ENCODE measurements at regions of chr22 and their contacts with region 1.

Region 1: GRCh38 chr22:45645526-45646414 is 25.9 kb upstream of the ATXN10 start:
- DNase-seq: peak in 9 of 10 donors; percentile 42 to 85 (median 62)
- H3K4me3 ChIP-seq: peak overlapping the region in 26 of 59 donors; percentile 2 to 45 (median 25)
- H3K27ac ChIP-seq: no peak overlapping the region
- H3K27me3 ChIP-seq: peaks cover 0 to 19% (median 0%) of the 10 kb centered on the region in 45 donors
- CTCF ChIP-seq: peak; percentile 74 to 99 (median 96)

Region 2: DNA sequence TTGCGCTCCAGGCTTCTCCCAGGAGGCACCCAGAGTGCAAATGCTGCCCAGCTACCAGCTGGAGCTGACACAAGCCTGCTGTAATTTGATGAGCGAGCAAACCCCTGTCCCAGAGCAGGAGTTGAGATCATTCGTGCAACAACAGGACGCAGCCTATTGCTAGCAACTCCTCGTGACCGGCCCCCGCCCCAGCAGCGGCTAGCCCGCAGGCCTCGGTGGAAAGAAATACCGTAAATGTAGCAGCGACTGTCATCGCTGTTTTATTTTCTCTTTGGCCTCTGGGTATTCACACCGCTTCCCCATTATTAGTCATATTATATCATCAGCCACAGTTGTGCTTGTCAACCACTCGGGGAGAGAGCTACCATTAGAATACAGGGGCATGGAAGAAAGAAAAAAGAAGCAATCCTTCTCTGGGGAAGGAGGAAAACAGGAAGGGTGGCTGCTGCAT is 33.3 kb before region 1 on chr22:
- intact Hi-C with region 1: no loop called
- DNase-seq: no peak
- H3K4me3 ChIP-seq: peak overlapping the region in 6 of 59 donors; percentile 2 to 31 (median 6)
- H3K27ac ChIP-seq: peak overlapping the region in 2 of 59 donors; percentile 24 to 35
- H3K27me3 ChIP-seq: no peaks in the 10 kb centered on the region
- CTCF ChIP-seq: no peak

Region 3: GRCh38 chr22:45863981-45864751 is 218.4 kb after region 1 on chr22:
- intact Hi-C with region 1: loop called (anchors 10 kb)
- DNase-seq: peak in 7 of 10 donors; percentile 61 to 75 (median 70)
- H3K4me3 ChIP-seq: no peak overlapping the region
- H3K27ac ChIP-seq: peak overlapping the region in 7 of 59 donors; percentile 26 to 77 (median 37)
- H3K27me3 ChIP-seq: peaks cover 0 to 16% (median 2%) of the 10 kb centered on the region in 45 donors
- CTCF ChIP-seq: peak; percentile 70 to 96 (median 88)

Measured in dorsolateral prefrontal cortex (tissue), 120 donors.